GM12878 (cell line): ENCODE measurements at regions of chr2 and their contacts with region 1.

Region 1: GRCh38 chr2:74147727-74148456 is at the start of gene BOLA3:
- DNase-seq: peak; percentile 32
- ATAC-seq: peak; percentile 97
- H3K4me3 ChIP-seq: peak within 1 kb of the TSS; percentile 89
- H3K27ac ChIP-seq: peak within 1 kb of the TSS; percentile 60
- H3K4me1 ChIP-seq: peaks cover 7% of the 10 kb centered on the region
- H3K27me3 ChIP-seq: no peaks in the 10 kb centered on the region
- CTCF ChIP-seq: peak; percentile 66 to 88 (median 67)
- EP300 ChIP-seq: no peak
- POLR2A ChIP-seq: peak; percentile 89
- RAD21 ChIP-seq: peak; percentile 48
- polyA plus RNA-seq, gene BOLA3: 164 to 168 TPM

Region 2: GRCh38 chr2:73685770-73686438 is 462.0 kb before region 1 on chr2:
- CTCF ChIA-PET with region 1: no interaction called
- POLR2A ChIA-PET with region 1: no interaction called
- RAD21 ChIA-PET with region 1: no interaction called
- SMC1A ChIA-PET with region 1: no interaction called
- in situ Hi-C with region 1: no loop called
- intact Hi-C with region 1: loop called (anchors 10 kb)
- DNase-seq: no peak
- ATAC-seq: no peak
- H3K4me3 ChIP-seq: no peak overlapping the region
- H3K27ac ChIP-seq: no peak overlapping the region
- H3K4me1 ChIP-seq: no peaks in the 10 kb centered on the region
- H3K27me3 ChIP-seq: no peaks in the 10 kb centered on the region
- CTCF ChIP-seq: no peak
- EP300 ChIP-seq: no peak
- POLR2A ChIP-seq: no peak
- RAD21 ChIP-seq: no peak

Region 3: DNA sequence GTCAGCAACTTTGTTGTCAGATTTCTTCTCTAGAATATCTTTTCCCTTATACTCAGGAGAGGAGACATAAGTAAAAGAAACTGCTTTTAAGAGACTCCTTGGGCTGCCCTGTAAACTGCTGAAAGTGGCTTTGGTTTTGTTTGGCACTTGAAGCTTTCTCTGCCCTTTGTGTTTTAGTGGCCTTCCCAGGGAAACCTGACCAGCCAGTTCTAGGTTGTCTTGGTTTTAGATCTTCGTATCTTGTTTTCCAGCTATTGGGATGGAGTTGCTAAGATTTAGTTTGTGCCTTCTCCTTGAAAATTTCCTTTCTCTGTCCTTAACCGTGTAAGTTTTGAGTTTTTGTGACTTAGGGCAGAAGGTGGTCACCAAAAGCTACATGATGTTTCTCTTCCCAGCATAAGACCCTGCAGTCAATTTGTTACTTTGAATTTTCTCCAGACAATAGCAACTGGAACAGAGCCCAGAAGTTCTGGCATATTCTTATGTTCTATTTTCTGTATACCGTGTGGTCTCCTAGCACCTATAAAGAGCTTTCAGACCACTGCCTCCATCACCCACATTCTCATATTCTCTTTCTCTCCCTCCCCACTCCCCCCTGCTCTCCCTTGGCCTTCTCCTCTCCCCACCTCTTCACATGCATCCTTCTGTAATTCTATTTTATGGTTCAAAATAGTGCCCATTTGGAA is 81.2 kb before region 1 on chr2:
- CTCF ChIA-PET with region 1: no interaction called
- POLR2A ChIA-PET with region 1: no interaction called
- RAD21 ChIA-PET with region 1: no interaction called
- SMC1A ChIA-PET with region 1: no interaction called
- in situ Hi-C with region 1: no loop called
- intact Hi-C with region 1: no loop called
- DNase-seq: no peak
- ATAC-seq: no peak
- H3K4me3 ChIP-seq: no peak overlapping the region
- H3K27ac ChIP-seq: no peak overlapping the region
- H3K4me1 ChIP-seq: no peaks in the 10 kb centered on the region
- H3K27me3 ChIP-seq: no peaks in the 10 kb centered on the region
- CTCF ChIP-seq: no peak
- EP300 ChIP-seq: no peak
- POLR2A ChIP-seq: no peak
- RAD21 ChIP-seq: no peak

Region 4: GRCh38 chr2:74119912-74120825 is 27.7 kb before region 1 on chr2:
- CTCF ChIA-PET with region 1: interaction called, 11 read pairs
- POLR2A ChIA-PET with region 1: interaction called, 4 read pairs
- RAD21 ChIA-PET with region 1: interaction called, 6 read pairs
- SMC1A ChIA-PET with region 1: interaction called, 7 read pairs
- in situ Hi-C with region 1: no loop called
- intact Hi-C with region 1: no loop called
- DNase-seq: peak; percentile 54
- ATAC-seq: peak; percentile 99
- H3K4me3 ChIP-seq: peak overlapping the region; percentile 95
- H3K27ac ChIP-seq: peak overlapping the region; percentile 96
- H3K4me1 ChIP-seq: peaks cover 3% of the 10 kb centered on the region; the same call in 1 of the 2 replicates
- H3K27me3 ChIP-seq: no peaks in the 10 kb centered on the region; a peak in 1 of 4 replicates
- CTCF ChIP-seq: peak; percentile 55 to 78 (median 70)
- EP300 ChIP-seq: no peak
- POLR2A ChIP-seq: peak; percentile 95
- RAD21 ChIP-seq: no peak

Region 5: GRCh38 chr2:74168739-74169138 is 20.8 kb after region 1 on chr2:
- CTCF ChIA-PET with region 1: interaction called, 31 read pairs
- POLR2A ChIA-PET with region 1: interaction called, 11 read pairs
- RAD21 ChIA-PET with region 1: interaction called, 6 read pairs
- SMC1A ChIA-PET with region 1: interaction called, 15 read pairs
- in situ Hi-C with region 1: no loop called
- intact Hi-C with region 1: no loop called
- DNase-seq: no peak
- ATAC-seq: peak; percentile 85
- H3K4me3 ChIP-seq: no peak overlapping the region
- H3K27ac ChIP-seq: no peak overlapping the region
- H3K4me1 ChIP-seq: peaks cover 5% of the 10 kb centered on the region
- H3K27me3 ChIP-seq: no peaks in the 10 kb centered on the region
- CTCF ChIP-seq: no peak
- EP300 ChIP-seq: peak in 1 of 2 experiments; percentile 41; a peak in 1 of 4 replicates
- POLR2A ChIP-seq: no peak
- RAD21 ChIP-seq: no peak

Region 6: DNA sequence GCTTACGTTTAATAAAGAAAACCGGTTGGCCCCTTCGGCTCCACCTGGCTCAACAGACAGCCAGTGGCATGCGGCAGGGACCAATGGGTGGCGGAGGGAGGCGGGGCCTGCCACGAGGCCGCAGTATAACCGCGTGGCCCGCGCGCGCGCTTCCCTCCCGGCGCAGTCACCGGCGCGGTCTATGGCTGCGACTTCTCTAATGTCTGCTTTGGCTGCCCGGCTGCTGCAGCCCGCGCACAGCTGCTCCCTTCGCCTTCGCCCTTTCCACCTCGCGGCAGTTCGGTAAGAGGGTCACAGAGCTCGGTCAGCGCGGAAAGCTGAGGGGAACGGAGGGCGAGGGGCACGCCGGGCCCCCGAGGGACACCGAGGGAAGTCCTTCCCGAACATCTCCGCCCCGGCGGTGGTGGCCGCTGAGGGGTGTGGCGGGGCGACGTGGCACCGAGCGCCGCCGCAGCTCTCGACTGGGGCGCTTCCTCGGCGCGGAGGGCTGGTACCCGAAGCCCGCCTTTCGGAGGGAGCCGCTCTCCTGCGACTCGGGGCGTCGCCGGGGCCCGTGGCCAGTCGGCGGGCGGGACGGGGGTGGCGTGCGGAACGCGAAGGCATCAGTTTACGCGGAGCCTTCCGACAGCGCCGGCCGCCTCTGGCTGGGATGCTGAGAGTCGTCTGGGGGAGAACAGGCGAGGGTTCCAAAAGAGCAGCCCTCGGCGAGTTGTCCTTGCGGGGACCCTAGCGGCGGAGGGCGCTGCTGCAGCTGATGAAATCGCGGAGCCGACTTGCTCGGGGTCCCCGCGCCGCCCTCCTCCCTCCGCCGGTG is 50.8 kb after region 1 on chr2 and contains the start of gene MTHFD2:
- CTCF ChIA-PET with region 1: interaction called, 49 read pairs
- POLR2A ChIA-PET with region 1: interaction called, 4 read pairs
- RAD21 ChIA-PET with region 1: interaction called, 21 read pairs
- SMC1A ChIA-PET with region 1: interaction called, 20 read pairs
- in situ Hi-C with region 1: no loop called
- intact Hi-C with region 1: no loop called
- DNase-seq: peak; percentile 90
- ATAC-seq: peak; percentile 92
- H3K4me3 ChIP-seq: peak within 1 kb of the TSS; percentile 96
- H3K27ac ChIP-seq: peak within 1 kb of the TSS; percentile 93
- H3K4me1 ChIP-seq: peaks cover 8% of the 10 kb centered on the region
- H3K27me3 ChIP-seq: no peaks in the 10 kb centered on the region
- CTCF ChIP-seq: peak; percentile 81 to 90 (median 87)
- EP300 ChIP-seq: no peak
- POLR2A ChIP-seq: peak; percentile 93
- RAD21 ChIP-seq: peak; percentile 62
- polyA plus RNA-seq, gene MTHFD2: 237 to 292 TPM

Region 7: DNA sequence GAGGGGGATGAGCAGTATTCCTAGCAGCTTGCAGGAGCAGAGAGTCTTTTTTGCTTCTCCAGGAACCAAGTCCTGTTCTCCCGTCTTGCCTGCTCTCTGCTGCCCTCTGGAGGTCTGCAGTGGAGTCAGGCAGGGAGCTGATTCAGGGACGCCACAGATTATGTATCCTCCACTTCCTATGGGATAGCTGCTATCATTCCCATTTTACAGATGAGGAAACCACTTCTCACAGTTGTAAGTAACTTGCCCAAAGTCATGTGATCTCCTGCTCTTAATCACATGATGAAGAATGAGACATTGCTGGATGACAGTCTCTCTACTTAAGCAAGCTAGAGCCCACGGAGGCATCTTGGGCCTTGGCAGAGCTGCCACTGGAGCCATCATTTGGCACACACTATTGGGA is 187.0 kb after region 1 on chr2:
- CTCF ChIA-PET with region 1: interaction called, 19 read pairs
- POLR2A ChIA-PET with region 1: no interaction called
- RAD21 ChIA-PET with region 1: interaction called, 6 read pairs
- SMC1A ChIA-PET with region 1: interaction called, 5 read pairs
- in situ Hi-C with region 1: no loop called
- intact Hi-C with region 1: loop called (anchors 10 kb)
- DNase-seq: peak; percentile 17
- ATAC-seq: peak; percentile 95
- H3K4me3 ChIP-seq: no peak overlapping the region
- H3K27ac ChIP-seq: no peak overlapping the region
- H3K4me1 ChIP-seq: no peaks in the 10 kb centered on the region
- H3K27me3 ChIP-seq: no peaks in the 10 kb centered on the region
- CTCF ChIP-seq: peak; percentile 88 to 97 (median 89)
- EP300 ChIP-seq: no peak
- POLR2A ChIP-seq: no peak
- RAD21 ChIP-seq: peak; percentile 90

Region 8: GRCh38 chr2:74553892-74554645 is 406.2 kb after region 1 on chr2 and contains the start of gene LOXL3:
- CTCF ChIA-PET with region 1: no interaction called
- POLR2A ChIA-PET with region 1: no interaction called
- RAD21 ChIA-PET with region 1: no interaction called
- SMC1A ChIA-PET with region 1: no interaction called
- in situ Hi-C with region 1: no loop called
- intact Hi-C with region 1: no loop called
- DNase-seq: no peak
- ATAC-seq: peak; percentile 20
- H3K4me3 ChIP-seq: peak within 1 kb of the TSS; percentile 95
- H3K27ac ChIP-seq: peak within 1 kb of the TSS; percentile 93
- H3K4me1 ChIP-seq: peaks cover 29% of the 10 kb centered on the region
- H3K27me3 ChIP-seq: no peaks in the 10 kb centered on the region
- CTCF ChIP-seq: no peak; a peak in 1 of 6 replicates
- EP300 ChIP-seq: peak in 1 of 2 experiments; percentile 28; a peak in 1 of 4 replicates
- POLR2A ChIP-seq: peak; percentile 62; the same call in 1 of the 2 replicates
- RAD21 ChIP-seq: 0 out of 2 replicates have a peak, but pooled peaks have one; percentile 4
- polyA plus RNA-seq, gene LOXL3: 6.2 to 6.7 TPM